Dendritic cell treated with granulocyte-macrophage colony-stimulating factor and Interleukin-4, amounts not matched to agents 40 ng/mL and 50 ng/mL, for 4 days (primary cell): ENCODE measurements at regions of chr2 and their contacts with region 1.

Region 1: DNA sequence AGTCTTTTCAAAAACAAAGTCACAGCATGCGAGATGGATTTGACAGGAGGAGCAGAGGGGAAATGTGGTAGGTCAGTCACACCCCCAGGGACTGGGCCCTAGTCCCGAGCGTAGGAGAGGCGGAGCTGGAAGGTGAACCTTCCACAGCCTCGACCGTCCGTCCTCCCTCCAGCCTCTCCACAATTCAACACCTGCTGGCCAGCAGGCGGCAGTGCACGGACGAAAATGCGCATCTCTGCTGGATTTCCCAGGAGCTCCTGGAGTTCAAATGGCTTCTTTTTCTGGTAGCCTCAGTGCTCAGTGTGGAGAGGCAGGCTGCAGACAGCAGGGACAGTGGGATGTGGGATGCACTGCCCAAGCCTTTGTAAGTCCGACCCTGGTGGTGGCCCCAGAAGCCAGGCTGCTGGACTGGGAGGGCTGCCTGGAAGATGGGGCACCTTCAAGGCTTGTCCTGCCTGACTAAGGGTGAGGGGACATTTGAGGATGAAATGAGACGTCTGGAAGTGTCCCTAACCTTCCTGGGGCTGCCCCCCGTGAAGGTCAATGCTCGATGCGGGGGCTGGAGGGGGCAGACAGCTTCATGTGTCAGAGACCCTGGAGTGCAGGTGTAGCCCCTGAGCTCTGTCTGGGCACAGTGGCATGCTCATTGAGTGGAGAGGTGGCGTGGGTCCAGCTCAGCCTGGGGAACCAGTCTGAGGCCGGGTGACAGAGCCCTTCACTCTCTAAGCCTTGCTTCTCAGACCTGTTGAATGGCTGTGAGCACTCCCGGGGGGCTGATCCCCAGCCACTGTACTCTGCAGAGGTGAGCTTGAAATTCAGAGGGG is 189.5 kb downstream of the TFCP2L1 start:
- H3K4me3 Mint-ChIP-seq: no peak overlapping the region
- H3K27ac Mint-ChIP-seq: no peak overlapping the region
- H3K4me1 Mint-ChIP-seq: no peaks in the 10 kb centered on the region
- H3K27me3 Mint-ChIP-seq: peaks cover 2% of the 10 kb centered on the region

Region 2: DNA sequence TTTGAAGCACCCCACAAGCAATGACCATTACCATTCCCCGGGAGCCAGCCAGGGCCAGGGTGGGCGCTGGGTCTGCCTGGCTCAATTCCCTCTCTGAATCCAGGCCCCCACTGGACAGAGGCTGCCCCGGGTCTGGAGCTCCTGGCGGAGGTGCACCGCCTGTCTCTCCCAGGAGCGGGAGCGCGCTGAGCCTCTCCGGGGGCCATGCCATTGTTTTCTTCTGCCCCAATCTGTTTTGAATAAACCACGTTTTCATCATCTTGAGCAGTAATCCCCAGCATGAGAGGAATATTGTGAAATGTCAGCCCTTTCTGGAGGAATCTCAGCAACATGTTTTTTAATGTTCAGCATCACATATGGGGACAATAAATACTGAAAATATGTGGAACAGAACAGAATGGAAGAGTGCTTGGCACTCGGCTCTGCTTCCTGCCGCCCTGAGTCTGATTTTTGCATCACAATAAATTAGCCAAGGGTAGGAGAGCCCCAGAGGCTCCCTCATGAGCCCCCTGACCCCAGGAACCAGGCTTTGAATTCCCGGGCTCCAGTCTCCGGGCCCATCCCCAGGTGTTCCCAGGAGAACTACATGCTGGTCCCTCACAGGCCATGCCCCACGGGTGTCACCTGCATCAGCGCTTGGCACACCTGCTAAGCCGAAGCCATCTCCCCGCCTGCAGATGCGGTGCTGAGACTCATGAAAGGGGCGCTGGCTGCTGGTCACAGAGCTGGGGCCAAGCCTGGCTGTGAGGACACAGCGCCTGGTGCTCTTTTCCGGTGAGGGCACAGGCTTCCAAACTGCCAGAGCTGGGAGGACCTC is 660.8 kb before region 1 on chr2:
- intact Hi-C with region 1: no loop called
- H3K4me3 Mint-ChIP-seq: no peak overlapping the region
- H3K27ac Mint-ChIP-seq: no peak overlapping the region
- H3K4me1 Mint-ChIP-seq: no peaks in the 10 kb centered on the region
- H3K27me3 Mint-ChIP-seq: peaks cover 18% of the 10 kb centered on the region

Region 3: GRCh38 chr2:121319953-121320352 is 224.5 kb after region 1 on chr2:
- intact Hi-C with region 1: loop called (anchors 2 kb)
- H3K4me3 Mint-ChIP-seq: no peak overlapping the region
- H3K27ac Mint-ChIP-seq: no peak overlapping the region
- H3K4me1 Mint-ChIP-seq: no peaks in the 10 kb centered on the region
- H3K27me3 Mint-ChIP-seq: peaks cover 3% of the 10 kb centered on the region

Region 4: GRCh38 chr2:121356058-121356640 is 260.7 kb after region 1 on chr2:
- intact Hi-C with region 1: loop called (anchors 1 kb)
- H3K4me3 Mint-ChIP-seq: no peak overlapping the region
- H3K27ac Mint-ChIP-seq: no peak overlapping the region
- H3K4me1 Mint-ChIP-seq: no peaks in the 10 kb centered on the region
- H3K27me3 Mint-ChIP-seq: no peaks in the 10 kb centered on the region